ENCODE measurements at regions of chr15 and their contacts with region 1.

Region 1: GRCh38 chr15:92881802-92882696 is 18.1 kb upstream of the CHD2 start:
- DNase-seq: peak; percentile 99
- H3K4me3 ChIP-seq: peak overlapping the region; percentile 86
- H3K27ac ChIP-seq: peak overlapping the region; percentile 82
- H3K4me1 ChIP-seq: peaks cover 70% of the 10 kb centered on the region
- CTCF ChIP-seq: no peak

Region 2: DNA sequence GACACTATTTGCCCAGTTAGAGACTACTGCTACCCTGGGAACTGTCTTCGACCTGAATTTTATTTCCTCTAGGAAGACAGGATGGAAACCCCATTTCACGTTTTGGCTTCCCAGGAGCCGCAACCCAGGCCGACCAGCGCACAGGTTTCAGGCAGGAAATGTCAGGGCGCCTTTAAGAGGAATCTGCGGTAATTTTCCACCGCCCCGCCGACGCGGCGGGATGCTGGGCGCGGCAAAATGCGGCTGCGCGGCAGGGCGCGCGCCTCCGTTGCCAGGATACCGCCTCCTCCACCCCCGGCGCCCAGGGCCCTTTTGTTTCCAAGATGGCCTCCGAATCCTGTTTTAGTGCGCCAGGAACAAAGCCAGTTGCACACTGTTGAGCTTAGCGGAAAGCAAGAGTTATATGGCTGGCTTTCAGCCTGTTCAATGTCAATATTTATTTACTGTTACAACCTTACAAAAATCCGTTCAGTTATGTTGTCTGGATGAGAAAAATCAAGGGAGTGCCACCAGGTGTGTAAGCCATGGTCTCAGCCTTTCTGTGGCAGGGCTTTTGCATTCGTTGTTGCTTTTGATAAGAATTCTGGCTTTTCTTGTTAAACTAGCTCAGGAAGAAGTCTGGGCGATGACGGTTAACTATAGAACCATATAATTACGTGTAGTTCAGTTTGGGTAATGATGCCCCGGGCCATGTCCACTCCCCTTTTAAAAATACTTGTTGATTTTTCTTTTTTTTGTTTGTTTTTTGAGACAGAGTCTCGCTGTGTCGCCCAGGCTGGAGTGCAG is 61.6 kb before region 1 on chr15:
- CTCF ChIA-PET with region 1: interaction called, 3 read pairs
- POLR2A ChIA-PET with region 1: interaction called, 53 read pairs
- intact Hi-C with region 1: no loop called
- DNase-seq: peak; percentile 91
- H3K4me3 ChIP-seq: peak overlapping the region; percentile 58
- H3K27ac ChIP-seq: peak overlapping the region; percentile 71
- H3K4me1 ChIP-seq: peaks cover 74% of the 10 kb centered on the region
- CTCF ChIP-seq: no peak

Region 3: DNA sequence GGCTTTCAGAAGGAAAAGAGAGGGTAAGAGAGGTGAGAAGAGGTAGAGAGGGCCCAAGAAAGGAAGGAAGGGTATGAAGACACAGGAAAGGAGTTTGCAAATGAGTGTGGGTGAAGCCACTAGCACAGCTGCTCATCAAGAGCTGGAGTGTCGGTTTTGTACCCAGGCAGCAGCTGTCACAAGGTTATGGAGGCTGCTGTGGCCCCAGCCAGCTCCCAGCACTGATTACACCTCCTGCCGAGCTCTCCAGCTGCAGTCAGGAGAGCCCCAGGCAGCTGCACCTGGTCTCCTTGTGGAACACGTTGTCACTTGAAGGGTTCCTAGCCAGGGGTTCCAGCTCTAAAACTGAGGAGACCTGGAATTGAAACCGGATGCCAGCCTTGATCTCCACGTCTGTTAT is 42.4 kb before region 1 on chr15:
- CTCF ChIA-PET with region 1: interaction called, 3 read pairs
- POLR2A ChIA-PET with region 1: interaction called, 203 read pairs
- intact Hi-C with region 1: no loop called
- DNase-seq: peak; percentile 87
- H3K4me3 ChIP-seq: peak overlapping the region; percentile 32
- H3K27ac ChIP-seq: peak overlapping the region; percentile 80
- H3K4me1 ChIP-seq: peaks cover 76% of the 10 kb centered on the region
- CTCF ChIP-seq: no peak

Region 4: DNA sequence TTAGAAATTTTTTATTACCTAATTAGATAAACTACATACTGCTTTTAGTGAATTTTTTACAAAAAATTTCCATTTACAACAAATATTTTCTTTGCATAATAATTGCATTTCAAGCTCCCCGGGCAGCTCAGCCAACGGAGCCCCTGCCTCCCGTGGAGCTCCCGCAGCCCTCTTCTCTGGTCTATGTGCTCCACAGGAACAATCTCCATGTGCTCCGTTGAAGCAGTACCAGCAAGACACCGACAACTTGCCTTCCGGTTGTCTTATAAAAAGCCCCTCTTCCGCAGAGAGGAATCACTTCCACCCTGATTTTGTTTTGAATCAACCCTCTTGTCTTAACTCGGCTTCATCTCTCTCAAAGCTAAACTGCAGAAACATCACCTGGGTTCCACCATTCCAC is 28.8 kb before region 1 on chr15:
- CTCF ChIA-PET with region 1: interaction called, 3 read pairs
- POLR2A ChIA-PET with region 1: interaction called, 19 read pairs
- intact Hi-C with region 1: no loop called
- DNase-seq: no peak
- H3K4me3 ChIP-seq: no peak overlapping the region
- H3K27ac ChIP-seq: no peak overlapping the region
- H3K4me1 ChIP-seq: peaks cover 20% of the 10 kb centered on the region
- CTCF ChIP-seq: no peak

Region 5: GRCh38 chr15:92892201-92892555 is 10.1 kb after region 1 on chr15:
- CTCF ChIA-PET with region 1: no interaction called
- POLR2A ChIA-PET with region 1: interaction called, 59 read pairs
- intact Hi-C with region 1: no loop called
- DNase-seq: no peak
- H3K4me3 ChIP-seq: no peak overlapping the region
- H3K27ac ChIP-seq: no peak overlapping the region
- H3K4me1 ChIP-seq: peaks cover 17% of the 10 kb centered on the region
- CTCF ChIP-seq: no peak

Region 6: DNA sequence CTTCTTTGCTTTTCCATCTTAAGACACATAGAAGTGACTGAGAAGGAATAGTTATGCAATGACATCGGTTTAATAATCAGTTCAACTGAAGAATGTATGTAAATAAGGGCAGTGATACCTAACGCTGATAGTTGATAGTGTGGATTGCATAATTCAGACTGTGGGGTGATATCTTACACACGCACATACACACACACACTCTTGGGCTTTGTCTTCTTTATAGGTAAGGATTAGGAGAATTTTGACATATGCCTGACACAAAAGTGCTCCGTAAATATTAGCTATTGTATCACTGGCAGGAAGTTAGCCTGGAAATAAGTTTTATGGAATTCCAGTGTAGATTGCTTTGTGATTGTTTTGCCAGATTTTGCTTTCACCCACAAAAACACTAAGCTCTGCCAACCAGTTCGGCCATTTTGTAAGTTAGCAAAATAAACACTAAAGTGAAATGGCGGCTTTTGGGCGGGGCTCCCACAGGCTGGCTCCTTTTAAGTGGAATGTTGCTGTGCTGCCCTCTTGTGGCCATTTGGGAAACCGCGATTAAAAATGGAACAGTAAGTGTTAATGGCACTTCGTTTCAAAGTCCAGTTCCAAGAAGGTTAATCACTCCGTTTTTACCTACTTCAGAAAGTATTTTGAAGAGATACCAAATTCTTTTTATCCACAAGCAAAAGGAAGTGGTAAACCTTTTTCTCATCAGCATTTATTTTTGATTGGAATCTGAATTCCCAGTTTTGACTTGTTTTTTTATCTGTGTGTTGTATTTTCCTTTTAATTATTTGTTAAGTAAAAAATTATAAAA is 35.8 kb after region 1 on chr15:
- CTCF ChIA-PET with region 1: no interaction called
- POLR2A ChIA-PET with region 1: interaction called, 5 read pairs
- intact Hi-C with region 1: loop called (anchors 1 kb)
- DNase-seq: peak; percentile 95
- H3K4me3 ChIP-seq: peak overlapping the region; percentile 2
- H3K27ac ChIP-seq: peak overlapping the region; percentile 74
- H3K4me1 ChIP-seq: peaks cover 73% of the 10 kb centered on the region
- CTCF ChIP-seq: peak; percentile 99

Measured in OCI-LY7 (cell line).